Activated CD4-positive, alpha-beta memory T cell treated with anti-CD3 and anti-CD28 coated beads, Interleukin-2, amount 10 ng/mL, durations not matched to agents 7 days and 5 days (primary cell): ENCODE measurements at regions of chr16 and their contacts with region 1.

Region 1: DNA sequence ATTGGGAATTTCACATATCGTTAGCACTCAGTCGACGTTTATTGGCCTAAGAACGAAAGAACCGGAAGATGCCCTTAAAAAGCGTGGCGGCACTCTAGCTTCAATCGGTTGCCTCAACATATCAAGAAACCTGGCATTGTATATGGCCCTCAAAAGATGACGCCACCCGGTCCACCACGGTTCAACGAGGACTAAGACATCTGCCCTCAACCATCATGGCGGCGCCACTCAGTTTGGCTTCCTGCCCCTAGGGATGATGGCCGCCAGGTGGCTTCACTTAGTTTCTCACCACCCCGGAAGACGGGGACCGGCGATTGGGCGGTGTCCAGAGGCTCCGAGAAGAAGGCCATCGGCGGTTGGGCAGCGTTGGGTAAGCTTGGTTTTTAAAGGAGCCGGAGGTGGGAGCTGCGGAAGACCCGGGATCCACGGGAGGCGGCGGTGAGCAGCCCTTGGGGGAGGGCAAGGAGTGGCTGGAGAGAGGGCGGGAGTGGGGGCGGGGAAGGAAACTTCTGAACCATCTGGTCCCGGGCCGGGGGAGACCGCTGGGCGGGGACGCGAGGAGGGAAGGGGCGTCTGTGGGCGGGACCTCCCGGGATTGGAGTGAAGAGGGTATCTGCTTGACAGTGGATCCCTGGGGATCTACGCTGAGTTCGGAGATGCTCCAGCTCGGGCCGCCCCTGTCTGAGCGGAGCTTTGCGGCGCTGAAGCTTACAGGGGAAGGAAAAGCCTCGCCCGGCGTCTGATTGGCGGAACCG is at the start of gene PRR14:
- DNase-seq: peak; percentile 99
- H3K4me3 Mint-ChIP-seq: peak within 1 kb of the TSS; percentile 96
- H3K27ac Mint-ChIP-seq: peak within 1 kb of the TSS; percentile 95
- H3K4me1 Mint-ChIP-seq: peaks cover 30% of the 10 kb centered on the region
- H3K27me3 Mint-ChIP-seq: peaks cover 3% of the 10 kb centered on the region
- total RNA-seq, gene PRR14: 78.4 to 86.1 TPM

Region 2: DNA sequence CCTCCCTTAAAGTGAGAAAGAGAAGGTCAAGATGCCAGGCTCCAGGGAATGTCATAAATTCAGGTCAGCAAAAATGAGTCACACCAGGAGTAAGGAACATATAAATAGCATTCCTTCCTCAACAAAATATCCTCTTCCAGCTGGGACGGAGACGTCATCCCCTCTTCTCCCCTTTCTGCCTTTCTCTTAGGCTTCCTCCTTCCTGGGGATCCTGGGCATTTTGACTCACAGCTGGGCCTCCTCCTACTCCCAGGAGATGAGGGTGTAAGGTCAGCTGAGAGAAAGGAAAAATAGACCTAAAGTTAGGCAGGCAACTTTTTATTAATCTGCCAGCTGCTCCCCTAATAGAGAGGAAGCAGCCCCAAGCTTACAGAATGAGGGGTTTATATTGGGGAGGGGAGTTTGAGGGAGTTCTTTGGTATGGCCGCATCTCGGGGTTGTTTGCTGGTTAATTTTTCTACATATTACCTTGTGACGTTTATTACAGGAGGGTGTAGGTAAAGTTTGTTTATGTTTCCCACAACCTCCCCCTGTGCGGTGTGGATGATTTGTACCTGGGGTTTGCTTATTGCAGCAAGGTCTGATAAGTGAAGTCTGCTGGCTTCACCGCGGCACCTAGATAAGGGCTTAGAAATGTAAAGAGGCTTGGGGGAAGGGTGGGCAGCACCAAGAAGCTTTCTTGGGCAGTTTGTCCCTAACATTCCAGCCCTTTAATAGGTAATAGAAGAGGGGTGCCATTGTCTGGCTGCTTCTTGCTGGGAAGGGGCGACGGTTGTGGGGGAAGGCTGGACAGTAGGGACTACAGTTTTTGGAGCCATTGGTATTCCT is 108.8 kb before region 1 on chr16:
- CTCF ChIA-PET with region 1: no interaction called
- POLR2A ChIA-PET with region 1: no interaction called
- DNase-seq: no peak
- H3K4me3 Mint-ChIP-seq: no peak overlapping the region
- H3K27ac Mint-ChIP-seq: no peak overlapping the region
- H3K4me1 Mint-ChIP-seq: peaks cover 12% of the 10 kb centered on the region
- H3K27me3 Mint-ChIP-seq: no peaks in the 10 kb centered on the region

Region 3: DNA sequence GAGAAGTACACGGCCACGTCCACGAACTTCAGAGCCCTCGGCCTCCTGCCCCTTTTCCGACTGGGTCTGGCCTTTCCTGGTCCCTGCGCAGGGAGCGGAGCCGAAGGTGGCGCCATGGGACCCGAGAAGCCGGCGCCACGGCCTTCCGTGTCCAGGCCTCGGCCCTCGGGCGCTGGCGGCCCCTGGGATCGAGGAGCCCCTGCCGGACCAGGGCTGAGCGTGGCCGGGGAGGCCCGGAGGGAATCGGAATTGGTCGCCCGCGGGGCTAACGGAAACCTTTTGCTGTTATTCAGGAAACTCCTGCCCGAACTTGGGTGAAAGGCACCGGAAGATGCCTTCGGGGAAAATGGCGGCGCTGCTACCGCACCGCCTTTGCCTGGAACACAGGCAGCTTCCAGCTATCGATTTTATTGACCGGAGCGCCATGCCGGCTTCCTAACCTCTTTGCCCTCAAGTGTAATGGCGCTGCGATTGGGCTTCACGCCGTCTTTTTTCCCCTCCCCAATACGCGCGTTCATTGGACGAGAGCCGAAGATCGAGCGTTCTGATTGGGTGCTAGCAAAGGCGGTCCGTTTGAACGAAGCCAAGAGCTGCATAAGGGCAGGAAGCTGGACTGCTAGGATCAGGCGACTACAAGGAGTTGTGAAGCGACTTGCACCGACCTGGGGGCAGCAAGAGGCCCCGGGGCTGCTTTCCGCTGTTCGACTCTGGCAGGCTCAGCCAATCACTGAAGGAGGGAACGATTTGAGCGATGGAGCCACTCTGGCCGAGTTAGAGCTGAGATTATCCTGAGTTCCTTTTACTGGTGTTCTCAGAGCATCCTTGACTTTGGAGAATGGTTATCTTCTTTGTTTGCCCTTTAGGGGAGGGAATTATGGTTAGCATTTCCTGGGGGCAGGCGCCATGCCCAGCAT is 40.4 kb before region 1 on chr16 and contains the start of gene ZNF689:
- CTCF ChIA-PET with region 1: interaction called, 7 read pairs
- POLR2A ChIA-PET with region 1: interaction called, 13 read pairs
- DNase-seq: peak; percentile 96
- H3K4me3 Mint-ChIP-seq: peak within 1 kb of the TSS; percentile 83
- H3K27ac Mint-ChIP-seq: peak within 1 kb of the TSS; percentile 90
- H3K4me1 Mint-ChIP-seq: peaks cover 29% of the 10 kb centered on the region
- H3K27me3 Mint-ChIP-seq: no peaks in the 10 kb centered on the region
- total RNA-seq, gene ZNF689: 9.9 to 11.7 TPM

Region 4: DNA sequence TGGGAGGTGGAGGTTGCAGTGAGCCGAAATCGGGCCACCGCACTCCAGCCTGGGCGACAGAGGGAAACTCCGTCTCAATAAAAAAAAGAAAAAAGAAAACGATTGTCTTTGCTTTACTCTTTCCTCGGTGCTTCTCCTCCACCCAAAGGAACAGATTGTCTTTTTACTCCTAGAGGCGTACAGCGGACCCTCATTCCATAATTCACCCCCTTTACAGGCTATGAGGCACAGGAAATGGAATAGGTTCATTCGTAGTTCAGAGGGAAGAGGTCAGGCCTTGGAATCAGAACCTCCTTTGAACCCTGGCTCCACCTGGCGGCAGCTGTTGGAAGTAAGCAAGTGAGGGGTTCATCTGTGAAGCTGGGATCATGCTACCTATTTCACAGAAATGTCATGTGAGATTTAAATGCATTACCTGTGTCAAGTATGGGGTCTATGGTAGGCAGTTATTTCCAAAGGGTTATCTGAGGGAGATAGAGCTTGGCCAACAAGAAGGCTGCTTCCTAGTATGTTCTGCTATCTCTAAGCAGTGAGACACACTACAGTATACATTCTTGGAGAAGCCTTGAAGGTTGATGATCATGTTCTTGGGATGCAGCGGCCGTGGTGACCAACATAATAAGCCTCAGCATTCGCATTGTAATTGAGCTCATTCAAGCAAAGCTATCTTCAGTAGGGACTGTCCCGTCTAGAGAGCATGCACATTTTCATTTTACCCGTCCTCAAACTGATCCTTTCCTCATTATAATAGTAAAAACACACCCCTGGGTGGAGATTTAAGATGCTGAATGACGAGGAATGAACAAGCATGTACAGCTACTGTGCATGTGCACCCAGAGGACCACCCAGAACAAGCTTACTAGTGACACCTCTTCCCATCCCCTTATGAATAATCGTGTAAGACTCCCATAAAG is 21.7 kb before region 1 on chr16:
- CTCF ChIA-PET with region 1: interaction called, 16 read pairs
- POLR2A ChIA-PET with region 1: interaction called, 24 read pairs
- DNase-seq: peak; percentile 90
- H3K4me3 Mint-ChIP-seq: peak overlapping the region; percentile 63
- H3K27ac Mint-ChIP-seq: peak overlapping the region; percentile 53
- H3K4me1 Mint-ChIP-seq: peaks cover 16% of the 10 kb centered on the region
- H3K27me3 Mint-ChIP-seq: peaks cover 2% of the 10 kb centered on the region

Region 5: GRCh38 chr16:30637942-30638341 is 12.6 kb before region 1 on chr16:
- CTCF ChIA-PET with region 1: interaction called, 5 read pairs
- POLR2A ChIA-PET with region 1: interaction called, 24 read pairs
- DNase-seq: peak; percentile 38
- H3K4me3 Mint-ChIP-seq: no peak overlapping the region
- H3K27ac Mint-ChIP-seq: no peak overlapping the region
- H3K4me1 Mint-ChIP-seq: peaks cover 19% of the 10 kb centered on the region
- H3K27me3 Mint-ChIP-seq: no peaks in the 10 kb centered on the region

Region 6: GRCh38 chr16:30692381-30693064 is 42.0 kb after region 1 on chr16:
- CTCF ChIA-PET with region 1: interaction called, 34 read pairs
- POLR2A ChIA-PET with region 1: interaction called, 11 read pairs
- DNase-seq: no peak
- H3K4me3 Mint-ChIP-seq: no peak overlapping the region
- H3K27ac Mint-ChIP-seq: peak overlapping the region; percentile 8
- H3K4me1 Mint-ChIP-seq: peaks cover 26% of the 10 kb centered on the region
- H3K27me3 Mint-ChIP-seq: no peaks in the 10 kb centered on the region

Region 7: DNA sequence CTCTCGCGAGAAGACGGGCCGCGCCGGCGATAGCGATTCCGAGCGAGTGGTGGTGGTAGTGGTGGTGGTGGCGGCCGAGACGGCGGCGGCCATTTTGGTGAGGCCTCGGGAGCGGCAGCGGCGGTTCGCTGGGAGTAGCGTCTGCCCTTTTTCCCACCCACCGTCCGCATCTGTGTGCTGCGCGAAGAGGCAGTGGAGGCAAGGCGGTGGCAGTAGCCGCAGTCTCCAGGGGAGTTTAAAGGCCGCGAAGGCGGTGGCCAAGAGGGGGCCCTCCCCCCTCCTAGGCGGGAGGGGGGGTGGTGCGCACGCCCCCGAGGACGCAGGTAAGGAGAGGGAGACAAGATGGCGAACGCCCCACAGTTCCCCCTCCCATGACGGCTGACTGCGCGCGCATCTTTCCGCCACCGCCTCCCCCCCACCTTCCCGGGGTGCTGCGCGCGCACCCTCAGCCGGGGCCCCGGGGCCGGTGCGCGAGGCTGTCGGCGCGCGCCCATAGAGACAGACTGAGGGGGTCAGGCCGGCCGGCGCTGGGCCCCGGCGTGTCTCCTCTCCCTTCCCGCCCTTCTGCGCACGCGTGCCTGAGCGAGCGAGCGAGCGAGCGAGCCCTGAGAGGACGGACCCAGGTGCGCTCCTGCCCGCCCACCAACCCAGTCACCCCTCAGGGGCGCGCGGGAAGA is 47.7 kb after region 1 on chr16:
- CTCF ChIA-PET with region 1: interaction called, 34 read pairs
- POLR2A ChIA-PET with region 1: interaction called, 11 read pairs
- DNase-seq: peak; percentile 99
- H3K4me3 Mint-ChIP-seq: peak overlapping the region; percentile 98
- H3K27ac Mint-ChIP-seq: peak overlapping the region; percentile 96
- H3K4me1 Mint-ChIP-seq: peaks cover 48% of the 10 kb centered on the region
- H3K27me3 Mint-ChIP-seq: no peaks in the 10 kb centered on the region